Lower leg skin (tissue), 4 donors: ENCODE measurements at regions of chr2 and their contacts with region 1.

Region 1: DNA sequence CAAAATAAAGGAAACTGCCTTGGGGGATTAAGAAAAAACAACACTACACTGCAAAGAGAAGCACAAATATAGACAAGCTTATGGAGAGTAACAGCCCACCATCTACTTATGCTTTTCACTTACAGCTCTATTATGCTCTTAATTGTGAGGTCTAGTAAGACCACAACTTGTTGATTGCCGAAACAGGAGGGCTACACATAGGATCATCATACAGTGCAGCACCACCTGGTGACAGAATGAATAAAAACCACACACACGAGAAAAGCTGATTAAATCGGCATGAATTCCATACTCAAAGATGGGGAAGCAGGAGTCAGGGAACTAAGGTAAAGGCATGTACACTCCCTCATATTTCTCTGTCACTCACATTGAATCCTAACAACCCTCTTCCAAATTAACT is 259.2 kb downstream of the IKZF2 start:
- DNase-seq: no peak
- H3K4me3 ChIP-seq: no peak overlapping the region
- CTCF ChIP-seq: no peak
- POLR2A ChIP-seq: no peak

Region 2: DNA sequence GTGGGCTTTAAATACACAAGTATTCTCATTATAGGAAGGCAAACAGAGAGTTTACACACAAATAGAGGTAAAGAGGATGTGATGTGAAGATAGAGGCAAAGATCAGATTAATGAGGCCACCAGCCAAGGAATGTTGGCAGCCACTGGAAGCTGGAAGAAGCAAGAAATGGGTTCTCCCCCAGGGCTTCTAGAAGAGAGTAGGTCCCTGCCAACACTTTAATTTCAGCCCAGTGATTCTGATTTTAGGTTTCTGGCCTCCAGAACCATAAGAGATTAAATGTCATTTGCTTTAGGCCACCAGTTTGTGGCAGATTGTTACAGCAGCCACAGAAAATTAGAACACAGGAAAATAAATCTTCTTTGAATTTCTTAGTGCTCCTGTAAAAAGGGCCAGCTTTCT is 1419.1 kb before region 1 on chr2:
- intact Hi-C with region 1: loop called (anchors 5 kb)
- DNase-seq: no peak
- H3K4me3 ChIP-seq: no peak overlapping the region
- CTCF ChIP-seq: no peak
- POLR2A ChIP-seq: no peak

Region 3: DNA sequence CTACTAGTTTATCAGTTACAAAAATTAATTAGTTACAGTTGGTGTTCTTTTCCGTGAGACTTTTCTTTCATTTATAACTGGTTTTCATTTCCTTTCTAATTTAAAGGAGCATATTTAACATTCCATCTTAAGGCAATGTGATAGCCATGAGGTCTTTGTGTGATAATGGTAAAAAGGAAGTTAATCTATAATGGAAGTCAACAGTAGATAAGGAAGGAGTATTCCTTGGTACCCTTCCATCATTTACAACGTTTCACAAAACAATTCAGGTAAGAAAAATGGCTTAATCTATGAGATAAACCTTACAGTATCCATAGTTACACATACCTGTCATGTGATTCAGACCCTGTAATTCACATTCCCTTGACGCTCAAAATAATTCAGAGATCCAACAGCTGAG is 993.3 kb after region 1 on chr2:
- intact Hi-C with region 1: no loop called
- DNase-seq: no peak
- H3K4me3 ChIP-seq: no peak overlapping the region
- CTCF ChIP-seq: no peak
- POLR2A ChIP-seq: no peak